Gastrocnemius medialis (tissue), 4 donors: ENCODE measurements at regions of chr9 and their contacts with region 1.

Region 1: DNA sequence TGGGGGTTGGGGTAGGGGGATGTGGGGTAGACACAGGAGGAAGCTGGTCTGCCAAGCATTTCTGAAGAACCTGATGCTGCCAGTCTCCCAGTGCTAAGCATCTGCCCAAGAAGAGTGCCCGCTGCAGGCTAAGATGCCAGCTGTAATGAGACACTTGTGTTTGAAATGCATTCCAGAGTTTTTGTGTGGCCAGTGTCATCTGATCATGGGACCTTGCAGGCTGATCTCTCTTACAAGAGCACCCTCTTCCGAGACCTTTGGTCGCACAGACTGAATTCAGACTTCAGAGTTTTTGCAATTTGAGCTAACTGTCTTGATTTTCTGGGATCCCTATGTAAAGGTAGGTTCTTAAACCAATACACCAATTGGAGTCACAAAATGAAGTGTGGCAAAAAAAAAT is 58.1 kb downstream of the DENND1A start:
- DNase-seq: peak; percentile 18 to 33
- ATAC-seq: peak; percentile 93
- H3K4me3 ChIP-seq: no peak overlapping the region
- H3K27ac ChIP-seq: no peak overlapping the region
- H3K4me1 ChIP-seq: peaks cover 7 to 10% of the 10 kb centered on the region in 2 donors
- H3K27me3 ChIP-seq: no peaks in the 10 kb centered on the region
- CTCF ChIP-seq: peak in 1 of 5 experiments; percentile 25
- POLR2A ChIP-seq: no peak

Region 2: DNA sequence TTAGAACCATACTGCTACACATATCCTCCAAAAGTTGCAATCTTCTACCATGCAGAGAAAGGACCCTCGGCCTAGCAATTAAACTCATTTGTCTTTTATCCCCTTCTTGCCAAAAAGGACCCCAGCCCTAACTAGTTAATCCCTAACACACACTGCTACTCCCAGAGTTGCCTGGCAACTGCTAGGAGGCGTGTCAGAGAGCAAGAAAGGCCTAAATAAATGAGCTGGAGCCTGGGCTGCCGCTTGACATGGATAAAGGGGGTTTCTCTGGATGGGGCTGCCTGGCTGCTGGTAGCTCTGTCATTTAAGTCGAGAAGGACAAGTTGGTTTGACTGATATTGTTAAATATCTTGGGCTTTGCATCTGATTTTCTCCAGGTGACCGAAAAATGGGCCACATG is 321.0 kb before region 1 on chr9:
- in situ Hi-C with region 1: no loop called
- intact Hi-C with region 1: loop called (anchors 10 kb)
- DNase-seq: no peak
- ATAC-seq: no peak
- H3K4me3 ChIP-seq: no peak overlapping the region
- H3K27ac ChIP-seq: no peak overlapping the region
- H3K4me1 ChIP-seq: no peaks in the 10 kb centered on the region
- H3K27me3 ChIP-seq: no peaks in the 10 kb centered on the region
- CTCF ChIP-seq: no peak
- POLR2A ChIP-seq: no peak